Mammary epithelial cell (primary cell): ENCODE measurements at regions of chr4 and their contacts with region 1.

Region 1: GRCh38 chr4:174999407-174999806 is 81.2 kb downstream of the ADAM29 start:
- DNase-seq: peak; percentile 36
- H3K4me3 ChIP-seq: no peak overlapping the region
- H3K27ac ChIP-seq: no peak overlapping the region
- H3K4me1 ChIP-seq: no peaks in the 10 kb centered on the region
- H3K27me3 ChIP-seq: no peaks in the 10 kb centered on the region
- CTCF ChIP-seq: no peak

Region 2: DNA sequence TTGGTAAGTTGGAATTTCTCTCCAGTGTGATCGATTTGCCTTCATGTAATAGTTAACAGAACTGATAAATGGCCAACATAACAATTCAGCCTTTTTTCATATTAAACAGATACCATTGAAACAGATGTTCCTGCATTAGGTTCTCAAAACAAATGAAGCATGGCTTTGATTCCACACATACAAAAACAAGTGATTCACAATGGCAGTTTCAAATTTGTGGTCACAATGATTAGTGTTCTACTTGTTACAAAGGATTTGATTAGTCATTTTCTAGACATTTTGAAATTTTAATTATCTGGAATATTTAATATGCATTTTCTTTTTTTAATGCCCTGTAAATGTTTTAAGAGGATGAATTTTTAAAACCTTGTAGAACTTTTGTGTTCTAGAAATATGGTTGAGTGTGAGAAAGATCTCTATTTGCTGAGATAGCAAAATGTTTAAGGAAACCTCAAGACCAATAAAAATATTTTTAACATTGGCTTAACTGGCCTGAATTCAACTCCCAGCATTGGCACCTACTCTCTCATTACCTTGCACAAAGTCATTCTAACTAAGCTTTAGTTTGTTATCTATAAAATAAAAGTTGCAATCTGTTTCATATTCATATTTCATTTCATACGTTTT is 151.5 kb before region 1 on chr4:
- CTCF ChIA-PET with region 1: no interaction called
- dilution Hi-C with region 1: no loop called
- in situ Hi-C with region 1: no loop called
- intact Hi-C with region 1: no loop called
- DNase-seq: no peak
- H3K4me3 ChIP-seq: no peak overlapping the region
- H3K27ac ChIP-seq: no peak overlapping the region
- H3K4me1 ChIP-seq: no peaks in the 10 kb centered on the region
- H3K27me3 ChIP-seq: no peaks in the 10 kb centered on the region
- CTCF ChIP-seq: no peak

Region 3: DNA sequence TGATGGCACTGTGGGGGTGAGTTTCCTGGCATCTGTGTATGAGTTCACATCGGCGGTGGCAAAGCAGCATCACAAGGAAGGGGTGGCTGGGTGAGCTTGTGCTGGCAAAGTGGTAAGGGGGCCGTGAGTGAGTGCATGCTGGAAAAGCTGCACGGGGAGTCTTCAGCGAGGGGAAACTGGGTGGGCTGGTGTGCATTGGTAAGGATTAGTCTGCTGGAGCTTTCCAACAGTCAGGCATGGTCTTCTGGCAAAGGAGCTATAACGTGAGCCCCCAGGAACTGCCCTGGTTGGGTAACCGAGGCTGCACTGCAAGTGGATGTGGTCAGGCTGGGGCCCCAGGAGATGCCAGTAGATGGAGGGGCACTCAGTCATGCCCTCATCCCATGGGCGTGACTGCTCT is 50.6 kb before region 1 on chr4:
- CTCF ChIA-PET with region 1: no interaction called
- dilution Hi-C with region 1: no loop called
- in situ Hi-C with region 1: no loop called
- intact Hi-C with region 1: loop called (anchors 2 kb)
- DNase-seq: no peak
- H3K4me3 ChIP-seq: no peak overlapping the region
- H3K27ac ChIP-seq: no peak overlapping the region
- H3K4me1 ChIP-seq: no peaks in the 10 kb centered on the region
- H3K27me3 ChIP-seq: no peaks in the 10 kb centered on the region
- CTCF ChIP-seq: no peak

Region 4: DNA sequence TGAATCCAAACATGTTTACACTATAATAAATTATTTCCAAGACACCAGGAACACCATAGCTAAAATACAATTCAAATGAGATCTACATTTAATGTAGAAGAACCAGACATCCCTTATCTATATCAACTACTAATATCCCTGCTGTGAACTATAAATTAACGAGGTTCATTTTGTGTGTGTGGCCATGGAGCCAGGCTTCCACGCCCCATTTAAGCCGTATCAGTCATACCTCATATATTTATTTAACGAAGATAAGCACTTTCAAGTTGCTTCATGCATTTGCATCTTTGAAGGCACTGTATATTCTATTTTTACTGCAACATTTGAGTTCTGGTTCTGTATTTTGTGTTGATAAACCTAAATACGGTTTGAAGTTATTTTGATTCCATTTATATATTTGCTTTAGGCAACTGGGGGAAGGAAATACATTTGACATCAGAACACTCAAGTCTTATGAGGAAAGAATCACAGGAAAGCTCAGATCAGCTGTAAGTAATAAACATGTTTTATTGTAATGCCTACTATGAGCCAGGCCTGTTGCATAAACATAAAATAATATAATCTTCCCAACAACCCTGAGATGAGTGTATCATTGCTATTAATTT is 1021.2 kb after region 1 on chr4:
- CTCF ChIA-PET with region 1: no interaction called
- dilution Hi-C with region 1: no loop called
- in situ Hi-C with region 1: no loop called
- intact Hi-C with region 1: no loop called
- DNase-seq: no peak
- H3K4me3 ChIP-seq: no peak overlapping the region
- H3K27ac ChIP-seq: no peak overlapping the region
- H3K4me1 ChIP-seq: no peaks in the 10 kb centered on the region
- H3K27me3 ChIP-seq: no peaks in the 10 kb centered on the region
- CTCF ChIP-seq: no peak